ENCODE measurements at regions of chr17 and their contacts with region 1.

Region 1: DNA sequence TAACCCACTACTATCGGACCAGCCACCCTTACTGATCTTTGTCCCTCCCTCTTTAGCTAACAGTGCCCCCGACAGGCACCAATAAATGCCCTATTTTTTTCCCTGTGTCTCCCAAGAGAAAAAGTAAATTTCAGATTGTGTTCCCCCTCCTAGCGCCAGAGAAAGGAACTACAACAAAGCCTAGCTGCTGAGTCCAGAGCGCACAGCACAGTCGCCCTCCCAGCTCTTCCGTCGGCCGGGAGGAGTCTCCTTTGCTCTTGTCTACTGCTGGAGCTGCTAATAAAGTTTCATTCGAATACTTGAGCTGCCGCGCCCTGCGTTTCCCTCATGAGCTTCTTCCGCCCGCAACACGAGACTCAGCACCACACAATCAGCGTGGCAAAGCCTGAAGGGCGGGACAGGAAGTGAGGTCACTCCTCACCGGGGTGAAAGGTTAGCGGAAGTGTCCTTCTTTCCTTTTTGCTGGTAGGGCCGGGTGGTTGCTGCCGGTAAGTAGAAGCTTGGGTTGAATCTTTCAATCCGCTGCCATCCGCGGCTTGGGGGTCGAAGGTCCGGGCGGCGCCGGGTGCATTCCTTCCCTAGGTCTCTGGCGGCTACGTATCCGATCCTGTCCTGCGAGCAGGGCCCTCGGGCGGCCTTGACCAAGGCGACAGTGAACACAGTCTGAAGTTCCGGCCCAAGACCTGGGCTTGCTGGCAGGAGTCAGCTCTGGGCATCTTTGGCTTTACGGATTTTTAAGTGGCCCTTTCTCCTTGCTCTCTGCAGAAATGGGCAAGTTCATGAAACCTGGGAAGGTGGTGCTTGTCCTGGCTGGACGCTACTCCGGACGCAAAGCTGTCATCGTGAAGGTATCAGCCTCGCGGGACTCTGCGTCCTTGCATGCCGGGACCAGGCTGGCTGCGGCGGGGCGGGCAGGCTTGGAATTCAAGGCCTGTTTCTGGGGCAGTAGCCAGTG is at the start of gene RPL27:
- DNase-seq: peak; percentile 98 to 99
- H3K4me3 ChIP-seq: peak within 1 kb of the TSS; percentile 59
- H3K4me3 Mint-ChIP-seq: peak within 1 kb of the TSS; percentile 90
- H3K27ac Mint-ChIP-seq: peak within 1 kb of the TSS; percentile 99
- H3K4me1 ChIP-seq: peaks cover 16% of the 10 kb centered on the region
- H3K4me1 Mint-ChIP-seq: peaks cover 12% of the 10 kb centered on the region
- H3K27me3 ChIP-seq: no peaks in the 10 kb centered on the region
- H3K27me3 Mint-ChIP-seq: no peaks in the 10 kb centered on the region
- CTCF ChIP-seq: peak; percentile 82 to 91
- total RNA-seq, gene RPL27: 1,565 and 1,613 TPM in 2 replicates

Region 2: DNA sequence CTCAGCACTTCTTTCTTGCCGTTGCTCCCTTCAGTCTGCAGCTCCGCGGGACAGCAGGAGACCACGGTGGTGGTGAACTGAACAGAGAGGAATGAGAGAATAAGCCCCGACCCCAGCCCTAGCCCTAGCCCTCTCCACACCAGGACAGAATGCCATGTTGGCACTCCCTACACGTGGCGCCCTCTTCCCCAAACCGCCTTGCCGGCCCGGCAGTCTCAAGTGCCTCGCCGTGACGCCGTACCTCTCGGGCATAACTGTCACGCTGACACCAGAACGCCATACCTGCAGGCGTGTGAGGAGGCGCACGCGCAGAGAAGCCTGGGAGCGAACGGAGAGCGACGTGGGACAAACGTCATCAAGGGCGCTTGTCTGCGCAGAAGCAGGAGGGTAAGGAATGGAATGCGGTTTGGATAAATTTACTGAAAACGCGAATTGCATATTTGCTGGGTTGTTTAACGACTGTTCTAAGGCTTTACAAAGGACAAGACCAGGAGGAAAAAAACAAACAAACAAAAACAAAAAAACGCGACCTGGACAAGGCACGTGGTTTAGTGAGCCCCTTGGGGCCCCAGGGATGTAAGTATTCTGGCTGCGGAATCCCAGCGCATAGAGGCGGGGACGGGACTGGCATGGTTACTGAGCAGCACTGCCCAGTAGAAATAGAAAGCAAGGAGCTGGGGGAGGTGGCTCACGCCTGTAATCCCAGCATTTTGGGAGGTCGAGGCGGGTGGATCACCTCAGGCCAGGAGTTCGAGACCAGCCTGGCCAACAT is 33.9 kb before region 1 on chr17 and contains the start of gene AARSD1:
- CTCF ChIA-PET with region 1: interaction called, 4 read pairs
- POLR2A ChIA-PET with region 1: interaction called, 16 read pairs
- intact Hi-C with region 1: no loop called
- DNase-seq: peak; percentile 95 to 96
- H3K4me3 ChIP-seq: peak within 1 kb of the TSS; percentile 64
- H3K4me3 Mint-ChIP-seq: peak within 1 kb of the TSS; percentile 99
- H3K27ac Mint-ChIP-seq: peak within 1 kb of the TSS; percentile 99
- H3K4me1 ChIP-seq: no peaks in the 10 kb centered on the region
- H3K4me1 Mint-ChIP-seq: peaks cover 9% of the 10 kb centered on the region
- H3K27me3 ChIP-seq: no peaks in the 10 kb centered on the region
- H3K27me3 Mint-ChIP-seq: no peaks in the 10 kb centered on the region
- CTCF ChIP-seq: no peak
- total RNA-seq, gene AARSD1: 69.0 and 76.2 TPM in 2 replicates

Region 3: DNA sequence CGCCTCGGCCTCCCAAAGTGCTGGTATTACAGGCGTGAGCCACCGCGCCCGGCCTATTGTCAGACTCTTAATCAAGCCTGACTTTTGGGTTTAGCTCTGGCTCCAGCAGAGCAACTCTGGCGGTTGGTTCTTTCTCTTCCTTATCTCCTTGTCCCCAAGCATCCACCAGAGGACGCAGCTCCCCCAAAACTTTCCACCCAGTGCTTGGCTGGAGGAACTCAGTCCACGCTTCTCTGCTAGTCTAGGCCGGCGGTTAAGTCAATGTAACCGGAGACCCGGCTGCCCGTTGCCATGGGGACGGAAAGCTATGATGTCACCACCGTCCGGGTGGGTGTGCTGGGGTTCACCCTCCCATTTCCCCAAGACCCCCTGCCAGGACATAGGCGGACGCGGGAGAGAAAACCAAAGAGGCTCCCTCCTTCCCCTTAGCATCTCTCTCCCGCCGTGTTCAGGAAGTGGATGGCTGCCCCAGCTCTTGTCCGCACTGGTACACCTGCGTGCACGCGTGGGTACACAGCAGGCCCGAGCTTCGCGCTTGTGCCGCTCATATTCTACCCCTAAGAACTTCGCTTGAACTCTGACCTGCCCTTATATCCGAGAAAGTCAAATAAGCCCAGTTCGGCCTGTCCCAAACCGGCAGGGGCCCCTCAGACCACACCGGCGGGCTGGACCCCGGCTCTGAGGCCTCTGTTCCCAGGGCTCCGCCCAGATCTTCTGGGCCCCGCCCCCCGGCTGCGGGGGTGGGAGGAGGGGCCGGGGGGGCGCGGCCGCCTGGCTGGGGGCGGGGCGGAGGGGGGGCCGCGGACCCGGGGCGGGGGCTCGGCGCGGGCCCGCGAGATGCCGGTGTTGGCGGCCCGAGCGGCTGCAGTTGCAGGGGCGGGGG is 26.4 kb after region 1 on chr17 and contains the start of gene RND2:
- CTCF ChIA-PET with region 1: interaction called, 10 read pairs
- POLR2A ChIA-PET with region 1: interaction called, 24 read pairs
- intact Hi-C with region 1: no loop called
- DNase-seq: peak; percentile 85 to 88
- H3K4me3 ChIP-seq: peak within 1 kb of the TSS; percentile 53
- H3K4me3 Mint-ChIP-seq: peak within 1 kb of the TSS; percentile 69
- H3K27ac Mint-ChIP-seq: peak within 1 kb of the TSS; percentile 85
- H3K4me1 ChIP-seq: peaks cover 12% of the 10 kb centered on the region
- H3K4me1 Mint-ChIP-seq: peaks cover 2% of the 10 kb centered on the region
- H3K27me3 ChIP-seq: no peaks in the 10 kb centered on the region
- H3K27me3 Mint-ChIP-seq: no peaks in the 10 kb centered on the region
- CTCF ChIP-seq: peak; percentile 34 to 79
- total RNA-seq, gene RND2: 1.2 and 1.7 TPM in 2 replicates

Region 4: GRCh38 chr17:43040655-43041054 is 42.4 kb after region 1 on chr17:
- CTCF ChIA-PET with region 1: no interaction called
- POLR2A ChIA-PET with region 1: no interaction called
- intact Hi-C with region 1: no loop called
- DNase-seq: no peak
- H3K4me3 ChIP-seq: no peak overlapping the region
- H3K4me3 Mint-ChIP-seq: no peak overlapping the region
- H3K27ac Mint-ChIP-seq: no peak overlapping the region
- H3K4me1 ChIP-seq: no peaks in the 10 kb centered on the region
- H3K4me1 Mint-ChIP-seq: no peaks in the 10 kb centered on the region
- H3K27me3 ChIP-seq: no peaks in the 10 kb centered on the region
- H3K27me3 Mint-ChIP-seq: no peaks in the 10 kb centered on the region
- CTCF ChIP-seq: no peak

Region 5: DNA sequence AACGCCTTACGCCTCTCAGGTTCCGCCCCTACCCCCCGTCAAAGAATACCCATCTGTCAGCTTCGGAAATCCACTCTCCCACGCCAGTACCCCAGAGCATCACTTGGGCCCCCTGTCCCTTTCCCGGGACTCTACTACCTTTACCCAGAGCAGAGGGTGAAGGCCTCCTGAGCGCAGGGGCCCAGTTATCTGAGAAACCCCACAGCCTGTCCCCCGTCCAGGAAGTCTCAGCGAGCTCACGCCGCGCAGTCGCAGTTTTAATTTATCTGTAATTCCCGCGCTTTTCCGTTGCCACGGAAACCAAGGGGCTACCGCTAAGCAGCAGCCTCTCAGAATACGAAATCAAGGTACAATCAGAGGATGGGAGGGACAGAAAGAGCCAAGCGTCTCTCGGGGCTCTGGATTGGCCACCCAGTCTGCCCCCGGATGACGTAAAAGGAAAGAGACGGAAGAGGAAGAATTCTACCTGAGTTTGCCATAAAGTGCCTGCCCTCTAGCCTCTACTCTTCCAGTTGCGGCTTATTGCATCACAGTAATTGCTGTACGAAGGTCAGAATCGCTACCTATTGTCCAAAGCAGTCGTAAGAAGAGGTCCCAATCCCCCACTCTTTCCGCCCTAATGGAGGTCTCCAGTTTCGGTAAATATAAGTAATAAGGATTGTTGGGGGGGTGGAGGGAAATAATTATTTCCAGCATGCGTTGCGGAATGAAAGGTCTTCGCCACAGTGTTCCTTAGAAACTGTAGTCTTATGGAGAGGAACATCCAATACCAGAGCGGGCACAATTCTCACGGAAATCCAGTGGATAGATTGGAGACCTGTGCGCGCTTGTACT is 127.1 kb after region 1 on chr17 and contains the start of gene BRCA1:
- CTCF ChIA-PET with region 1: no interaction called
- POLR2A ChIA-PET with region 1: interaction called, 16 read pairs
- intact Hi-C with region 1: no loop called
- DNase-seq: peak; percentile 98 to 99
- H3K4me3 ChIP-seq: peak within 1 kb of the TSS; percentile 90
- H3K4me3 Mint-ChIP-seq: peak within 1 kb of the TSS; percentile 98
- H3K27ac Mint-ChIP-seq: peak within 1 kb of the TSS; percentile 99
- H3K4me1 ChIP-seq: peaks cover 18% of the 10 kb centered on the region
- H3K4me1 Mint-ChIP-seq: no peaks in the 10 kb centered on the region
- H3K27me3 ChIP-seq: no peaks in the 10 kb centered on the region
- H3K27me3 Mint-ChIP-seq: no peaks in the 10 kb centered on the region
- CTCF ChIP-seq: no peak
- total RNA-seq, gene BRCA1: 50.8 and 51.1 TPM in 2 replicates

Region 6: DNA sequence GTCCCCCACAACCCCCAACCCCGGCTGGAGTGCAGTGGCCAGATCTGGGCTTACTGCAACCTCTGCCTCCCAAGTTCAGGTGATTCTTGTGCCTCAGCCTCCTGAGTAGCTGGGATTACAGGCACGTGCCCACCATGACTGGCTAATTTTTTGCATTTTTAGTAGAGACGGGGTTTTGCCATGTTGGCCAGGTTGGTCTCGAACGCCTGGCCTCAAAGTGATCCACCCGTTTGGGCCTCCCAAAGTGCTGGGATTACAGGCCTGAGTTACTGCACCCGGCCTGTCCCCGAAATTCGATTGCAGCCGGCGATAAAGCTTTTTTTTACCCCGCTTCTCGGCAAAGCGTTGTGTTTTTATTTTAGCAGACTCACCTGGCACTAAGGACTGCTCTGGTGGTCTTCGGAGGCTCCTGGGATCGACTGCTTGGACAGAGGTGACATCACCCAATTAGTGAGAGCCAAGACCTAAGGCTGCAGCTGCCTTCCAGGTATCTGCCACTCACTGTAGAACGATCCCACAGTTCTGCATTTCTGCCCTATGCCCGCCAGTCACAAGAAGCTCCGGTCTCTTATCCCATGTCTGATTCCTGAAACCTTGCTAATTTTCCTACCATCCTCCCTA is 318.4 kb after region 1 on chr17:
- CTCF ChIA-PET with region 1: no interaction called
- POLR2A ChIA-PET with region 1: interaction called, 14 read pairs
- intact Hi-C with region 1: no loop called
- DNase-seq: no peak
- H3K4me3 ChIP-seq: no peak overlapping the region
- H3K4me3 Mint-ChIP-seq: no peak overlapping the region
- H3K27ac Mint-ChIP-seq: no peak overlapping the region
- H3K4me1 ChIP-seq: peaks cover 4% of the 10 kb centered on the region
- H3K4me1 Mint-ChIP-seq: peaks cover 7% of the 10 kb centered on the region
- H3K27me3 ChIP-seq: no peaks in the 10 kb centered on the region
- H3K27me3 Mint-ChIP-seq: no peaks in the 10 kb centered on the region
- CTCF ChIP-seq: no peak

Region 7: DNA sequence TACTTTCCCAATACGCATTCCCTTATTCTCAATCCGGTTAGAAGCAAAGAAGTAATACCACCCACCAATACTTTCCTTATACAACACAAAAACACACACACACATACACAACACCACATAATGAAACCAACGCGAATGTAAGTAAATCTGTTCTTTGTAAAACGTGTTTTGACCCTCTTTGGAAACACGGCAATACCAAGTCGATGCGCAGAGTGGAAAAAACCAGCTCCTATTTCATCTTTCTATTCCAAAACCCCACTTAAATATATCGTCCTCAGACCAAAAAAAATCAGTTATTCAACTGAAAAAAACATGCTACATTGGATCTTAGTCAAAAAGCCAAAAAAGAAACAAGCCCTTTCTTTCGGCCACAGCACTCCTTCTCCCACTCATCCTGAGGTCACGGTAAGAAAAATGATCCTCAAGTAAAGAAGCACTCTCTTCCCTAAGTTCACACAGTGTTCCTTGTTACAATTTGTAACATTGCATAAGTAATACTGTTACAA is 369.5 kb after region 1 on chr17:
- CTCF ChIA-PET with region 1: no interaction called
- POLR2A ChIA-PET with region 1: interaction called, 13 read pairs
- intact Hi-C with region 1: no loop called
- DNase-seq: peak; percentile 79 to 80
- H3K4me3 ChIP-seq: peak overlapping the region; percentile 15; the same call in 1 of the 2 replicates
- H3K4me3 Mint-ChIP-seq: peak overlapping the region; percentile 90
- H3K27ac Mint-ChIP-seq: peak overlapping the region; percentile 100
- H3K4me1 ChIP-seq: peaks cover 31% of the 10 kb centered on the region
- H3K4me1 Mint-ChIP-seq: peaks cover 43% of the 10 kb centered on the region
- H3K27me3 ChIP-seq: no peaks in the 10 kb centered on the region
- H3K27me3 Mint-ChIP-seq: peaks cover 4% of the 10 kb centered on the region
- CTCF ChIP-seq: no peak